A673 (cell line): ENCODE measurements at regions of chr1 and their contacts with region 1.

Region 1: DNA sequence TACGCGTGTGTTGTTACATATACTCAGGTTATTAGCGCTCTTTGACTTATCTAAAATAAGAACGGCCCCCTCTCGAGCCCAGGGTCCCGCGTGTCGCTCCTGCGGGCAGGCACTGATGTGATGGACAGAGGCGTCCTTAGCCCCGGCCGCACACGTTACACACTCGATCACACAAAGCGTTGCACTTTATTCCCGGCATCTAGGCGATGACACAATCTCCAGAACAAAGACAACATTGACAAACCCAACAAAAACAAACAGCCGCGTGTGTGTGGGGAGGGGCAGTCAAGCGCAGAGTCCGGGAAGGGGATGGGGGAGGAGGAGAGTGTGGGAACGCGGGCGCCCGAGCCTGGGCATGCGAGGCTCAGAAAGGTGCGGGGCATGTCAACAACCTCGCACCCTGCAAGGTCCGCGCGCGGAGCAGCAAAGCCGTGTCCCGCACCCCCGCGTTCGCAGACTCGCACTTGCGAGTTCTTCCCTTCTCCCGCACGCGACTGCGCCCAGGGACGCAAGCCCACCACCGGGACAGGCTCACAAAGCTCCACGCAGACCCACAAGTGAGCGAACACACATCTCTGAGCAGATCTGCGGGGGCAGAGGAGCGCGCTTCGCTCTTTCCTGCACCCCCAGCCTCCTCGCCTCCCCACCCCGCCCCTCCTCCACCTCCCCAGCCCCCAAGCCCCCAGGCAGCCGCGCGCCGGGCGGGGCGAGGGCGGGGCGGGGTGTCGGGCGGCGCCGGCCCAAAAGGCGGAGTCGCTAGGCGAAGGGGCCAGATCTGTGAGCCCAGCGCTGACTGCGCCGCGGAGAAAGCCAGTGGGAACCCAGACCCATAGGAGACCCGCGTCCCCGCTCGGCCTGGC is at the start of gene EFNA1:
- DNase-seq: peak; percentile 49
- H3K4me3 ChIP-seq: peak within 1 kb of the TSS; percentile 56
- H3K27ac ChIP-seq: no peak within 1 kb of the TSS
- H3K4me1 ChIP-seq: peaks cover 35% of the 10 kb centered on the region
- H3K27me3 ChIP-seq: no peaks in the 10 kb centered on the region
- CTCF ChIP-seq: no peak
- total RNA-seq, gene EFNA1: 0.90 and 1.0 TPM in 2 replicates

Region 2: GRCh38 chr1:155091071-155091709 is 36.1 kb before region 1 on chr1:
- CTCF ChIA-PET with region 1: interaction called, 6 read pairs
- POLR2A ChIA-PET with region 1: no interaction called
- intact Hi-C with region 1: loop called (anchors 5 kb)
- DNase-seq: peak; percentile 91
- H3K4me3 ChIP-seq: no peak overlapping the region
- H3K27ac ChIP-seq: no peak overlapping the region
- H3K4me1 ChIP-seq: peaks cover 7% of the 10 kb centered on the region
- H3K27me3 ChIP-seq: no peaks in the 10 kb centered on the region
- CTCF ChIP-seq: peak; percentile 99